ENCODE measurements at regions of chr7 and their contacts with region 1.

Region 1: GRCh38 chr7:92609921-92610518 is 19.8 kb upstream of the FAM133B start:
- DNase-seq: no peak
- H3K4me3 Mint-ChIP-seq: no peak overlapping the region
- H3K27ac Mint-ChIP-seq: no peak overlapping the region
- H3K4me1 Mint-ChIP-seq: peaks cover 23% of the 10 kb centered on the region
- H3K27me3 Mint-ChIP-seq: no peaks in the 10 kb centered on the region

Region 2: DNA sequence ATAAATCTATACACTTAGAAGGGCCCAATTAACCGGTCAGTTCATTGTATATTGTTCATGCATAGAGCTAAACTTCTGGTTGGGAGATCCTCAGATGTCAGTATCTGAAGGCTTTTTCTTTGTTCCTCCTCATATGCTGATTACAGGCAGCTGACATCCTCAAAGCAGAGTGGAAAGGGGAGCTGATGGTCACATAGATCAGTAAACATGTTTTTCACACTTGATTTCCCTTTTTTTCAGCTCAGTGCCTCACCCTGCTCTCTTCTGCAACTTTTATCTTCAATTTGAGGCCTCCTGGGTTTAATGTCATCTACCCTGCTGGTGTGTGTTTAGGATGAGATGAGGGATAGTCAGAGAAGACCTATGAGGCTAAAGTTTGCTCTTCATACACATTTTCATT is 1643.7 kb before region 1 on chr7:
- CTCF ChIA-PET with region 1: no interaction called
- intact Hi-C with region 1: no loop called
- DNase-seq: no peak
- H3K4me3 Mint-ChIP-seq: no peak overlapping the region
- H3K27ac Mint-ChIP-seq: no peak overlapping the region
- H3K4me1 Mint-ChIP-seq: no peaks in the 10 kb centered on the region
- H3K27me3 Mint-ChIP-seq: no peaks in the 10 kb centered on the region

Region 3: GRCh38 chr7:92590711-92591310 is 19.2 kb before region 1 on chr7:
- CTCF ChIA-PET with region 1: interaction called, 10 read pairs
- intact Hi-C with region 1: loop called (anchors 2 kb)
- DNase-seq: no peak
- H3K4me3 Mint-ChIP-seq: peak overlapping the region; percentile 86
- H3K27ac Mint-ChIP-seq: no peak overlapping the region
- H3K4me1 Mint-ChIP-seq: peaks cover 39% of the 10 kb centered on the region
- H3K27me3 Mint-ChIP-seq: peaks cover 3% of the 10 kb centered on the region